ENCODE measurements at regions of chr7 and their contacts with region 1.

Region 1: GRCh38 chr7:135170274-135170997 is at the start of gene CYREN:
- DNase-seq: peak; percentile 75 to 95 (median 87)
- ATAC-seq: peak; percentile 77
- H3K4me3 ChIP-seq: peak within 1 kb of the TSS; percentile 82
- H3K4me3 Mint-ChIP-seq: peak within 1 kb of the TSS; percentile 91
- H3K27ac ChIP-seq: peak within 1 kb of the TSS; percentile 94
- H3K27ac Mint-ChIP-seq: peak within 1 kb of the TSS; percentile 94
- H3K4me1 ChIP-seq: peaks cover 47% of the 10 kb centered on the region
- H3K4me1 Mint-ChIP-seq: peaks cover 48% of the 10 kb centered on the region
- H3K27me3 ChIP-seq: no peaks in the 10 kb centered on the region
- H3K27me3 Mint-ChIP-seq: no peaks in the 10 kb centered on the region
- CTCF ChIP-seq: peak; percentile 76
- total RNA-seq, gene CYREN: 14.0 to 15.8 TPM

Region 2: GRCh38 chr7:134585897-134586296 is 584.5 kb before region 1 on chr7:
- CTCF ChIA-PET with region 1: no interaction called
- POLR2A ChIA-PET with region 1: no interaction called
- intact Hi-C with region 1: no loop called
- DNase-seq: no peak
- ATAC-seq: no peak
- H3K4me3 ChIP-seq: no peak overlapping the region
- H3K4me3 Mint-ChIP-seq: no peak overlapping the region
- H3K27ac ChIP-seq: no peak overlapping the region
- H3K27ac Mint-ChIP-seq: no peak overlapping the region
- H3K4me1 ChIP-seq: no peaks in the 10 kb centered on the region
- H3K4me1 Mint-ChIP-seq: no peaks in the 10 kb centered on the region
- H3K27me3 ChIP-seq: peaks cover 2 to 14% of the 10 kb centered on the region in 2 experiments
- H3K27me3 Mint-ChIP-seq: peaks cover 41% of the 10 kb centered on the region
- CTCF ChIP-seq: no peak

Region 3: DNA sequence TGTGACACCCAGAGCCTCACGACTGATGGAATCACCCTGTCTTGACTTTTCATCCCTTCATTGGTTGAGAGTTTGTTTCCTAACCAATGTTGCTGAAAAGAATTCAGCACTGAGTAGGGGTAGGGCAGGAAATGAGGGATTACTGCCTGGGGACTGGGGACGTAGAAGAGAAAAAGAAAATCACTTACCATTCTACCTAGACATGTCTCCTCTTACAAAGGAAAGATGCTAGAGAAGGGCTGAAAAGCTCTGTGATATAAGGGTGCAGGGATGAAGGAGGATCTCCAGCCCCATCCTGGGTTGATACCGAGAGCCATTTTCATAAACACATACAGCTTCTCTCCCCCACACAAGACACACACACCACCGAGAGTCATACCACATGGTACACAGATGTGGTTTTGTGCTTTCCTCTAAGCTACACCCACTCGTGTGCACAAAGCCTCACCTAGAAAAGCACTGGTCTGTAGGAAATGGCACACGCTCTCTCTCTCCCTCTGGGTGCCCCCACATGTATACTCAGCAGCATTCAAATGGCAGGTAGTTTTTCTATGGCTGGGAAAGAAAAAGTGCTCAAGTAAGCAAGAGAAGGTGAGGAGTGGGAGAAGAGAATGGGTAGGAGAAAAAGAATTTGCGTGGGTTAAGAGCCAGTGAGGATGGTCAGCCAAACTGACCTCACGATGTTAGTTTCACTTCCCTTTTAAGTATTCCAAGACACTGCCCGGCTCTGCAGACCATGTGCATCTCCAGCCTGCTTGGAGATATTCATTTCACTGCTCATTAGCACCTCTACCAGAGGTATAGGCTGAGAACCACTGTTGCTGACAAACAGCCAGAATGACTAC is 305.2 kb before region 1 on chr7:
- CTCF ChIA-PET with region 1: no interaction called
- POLR2A ChIA-PET with region 1: no interaction called
- intact Hi-C with region 1: loop called in 1 of 2 experiments (anchors 10 kb)
- DNase-seq: peak in 12 of 14 experiments; percentile 4 to 68 (median 29)
- ATAC-seq: peak; percentile 86
- H3K4me3 ChIP-seq: peak overlapping the region; percentile 46
- H3K4me3 Mint-ChIP-seq: peak overlapping the region; percentile 63
- H3K27ac ChIP-seq: peak overlapping the region; percentile 33 to 61
- H3K27ac Mint-ChIP-seq: peak overlapping the region; percentile 90
- H3K4me1 ChIP-seq: peaks cover 21% of the 10 kb centered on the region
- H3K4me1 Mint-ChIP-seq: peaks cover 50% of the 10 kb centered on the region
- H3K27me3 ChIP-seq: no peaks in the 10 kb centered on the region
- H3K27me3 Mint-ChIP-seq: no peaks in the 10 kb centered on the region
- CTCF ChIP-seq: no peak

Region 4: GRCh38 chr7:134986363-134987251 is 183.8 kb before region 1 on chr7 and contains the start of gene AGBL3:
- CTCF ChIA-PET with region 1: interaction called, 45 read pairs
- POLR2A ChIA-PET with region 1: interaction called, 55 read pairs
- intact Hi-C with region 1: loop called (anchors 1 to 2 kb)
- DNase-seq: peak; percentile 79 to 93 (median 85)
- ATAC-seq: peak; percentile 91
- H3K4me3 ChIP-seq: peak within 1 kb of the TSS; percentile 90
- H3K4me3 Mint-ChIP-seq: peak within 1 kb of the TSS; percentile 97
- H3K27ac ChIP-seq: peak within 1 kb of the TSS; percentile 89 to 92
- H3K27ac Mint-ChIP-seq: peak within 1 kb of the TSS; percentile 94
- H3K4me1 ChIP-seq: no peaks in the 10 kb centered on the region
- H3K4me1 Mint-ChIP-seq: peaks cover 46% of the 10 kb centered on the region
- H3K27me3 ChIP-seq: no peaks in the 10 kb centered on the region
- H3K27me3 Mint-ChIP-seq: no peaks in the 10 kb centered on the region
- CTCF ChIP-seq: peak; percentile 85
- total RNA-seq, gene AGBL3: 2.2 to 2.5 TPM

Region 5: GRCh38 chr7:135160098-135160857 is 10.2 kb before region 1 on chr7:
- CTCF ChIA-PET with region 1: interaction called, 19 read pairs
- POLR2A ChIA-PET with region 1: interaction called, 10 read pairs
- intact Hi-C with region 1: no loop called
- DNase-seq: peak in 1 of 14 experiments; percentile 47
- ATAC-seq: no peak
- H3K4me3 ChIP-seq: no peak overlapping the region
- H3K4me3 Mint-ChIP-seq: no peak overlapping the region
- H3K27ac ChIP-seq: no peak overlapping the region
- H3K27ac Mint-ChIP-seq: peak overlapping the region; percentile 29
- H3K4me1 ChIP-seq: peaks cover 32% of the 10 kb centered on the region
- H3K4me1 Mint-ChIP-seq: peaks cover 34% of the 10 kb centered on the region
- H3K27me3 ChIP-seq: no peaks in the 10 kb centered on the region
- H3K27me3 Mint-ChIP-seq: no peaks in the 10 kb centered on the region
- CTCF ChIP-seq: no peak

Region 6: GRCh38 chr7:135320277-135320676 is 149.8 kb after region 1 on chr7:
- CTCF ChIA-PET with region 1: no interaction called
- POLR2A ChIA-PET with region 1: no interaction called
- intact Hi-C with region 1: no loop called
- DNase-seq: no peak
- ATAC-seq: no peak
- H3K4me3 ChIP-seq: no peak overlapping the region
- H3K4me3 Mint-ChIP-seq: no peak overlapping the region
- H3K27ac ChIP-seq: no peak overlapping the region
- H3K27ac Mint-ChIP-seq: no peak overlapping the region
- H3K4me1 ChIP-seq: no peaks in the 10 kb centered on the region
- H3K4me1 Mint-ChIP-seq: no peaks in the 10 kb centered on the region
- H3K27me3 ChIP-seq: no peaks in the 10 kb centered on the region
- H3K27me3 Mint-ChIP-seq: no peaks in the 10 kb centered on the region
- CTCF ChIP-seq: no peak

Region 7: GRCh38 chr7:135578569-135578968 is 408.1 kb after region 1 on chr7:
- CTCF ChIA-PET with region 1: no interaction called
- POLR2A ChIA-PET with region 1: no interaction called
- intact Hi-C with region 1: no loop called
- DNase-seq: no peak
- ATAC-seq: no peak
- H3K4me3 ChIP-seq: no peak overlapping the region
- H3K4me3 Mint-ChIP-seq: no peak overlapping the region
- H3K27ac ChIP-seq: no peak overlapping the region
- H3K27ac Mint-ChIP-seq: no peak overlapping the region
- H3K4me1 ChIP-seq: no peaks in the 10 kb centered on the region
- H3K4me1 Mint-ChIP-seq: peaks cover 4% of the 10 kb centered on the region
- H3K27me3 ChIP-seq: no peaks in the 10 kb centered on the region
- H3K27me3 Mint-ChIP-seq: no peaks in the 10 kb centered on the region
- CTCF ChIP-seq: no peak

Measured in CD4-positive, alpha-beta T cell (primary cell).